A549 (cell line): ENCODE measurements at regions of chr1 and their contacts with region 1.

Region 1: GRCh38 chr1:8878448-8879347 is at the start of gene ENO1:
- DNase-seq: peak; percentile 79 to 97
- ATAC-seq: peak; percentile 67 to 72
- H3K4me3 ChIP-seq: peak within 1 kb of the TSS; percentile 78
- H3K27ac ChIP-seq: peak within 1 kb of the TSS; percentile 99
- H3K4me1 ChIP-seq: peaks cover 47% of the 10 kb centered on the region
- CTCF ChIP-seq: no peak
- EP300 ChIP-seq: no peak
- POLR2A ChIP-seq: peak; percentile 90
- RAD21 ChIP-seq: 0 out of 5 replicates have a peak, but pooled peaks of 1 of the 2 experiments have one; percentile 11
- polyA plus RNA-seq, gene ENO1: 1,899 and 1,948 TPM in 2 replicates

Region 2: GRCh38 chr1:8858888-8859706 is 19.6 kb before region 1 on chr1:
- CTCF ChIA-PET with region 1: interaction called, 23 read pairs
- POLR2A ChIA-PET with region 1: interaction called, 12 read pairs
- DNase-seq: peak in 1 of 2 experiments; percentile 72
- ATAC-seq: peak; percentile 4 to 20; a peak in 5 of 6 replicates
- H3K4me3 ChIP-seq: no peak overlapping the region
- H3K27ac ChIP-seq: peak overlapping the region in 1 of 2 experiments; percentile 56; a peak in 2 of 6 replicates
- H3K4me1 ChIP-seq: peaks cover 40% of the 10 kb centered on the region; the same call in 2 of the 3 replicates
- CTCF ChIP-seq: peak; percentile 52
- EP300 ChIP-seq: no peak
- POLR2A ChIP-seq: no peak
- RAD21 ChIP-seq: peak; percentile 37 to 43; a peak in 4 of 5 replicates

Region 3: GRCh38 chr1:8866792-8867415 is 11.8 kb before region 1 on chr1:
- CTCF ChIA-PET with region 1: interaction called, 23 read pairs
- POLR2A ChIA-PET with region 1: interaction called, 20 read pairs
- DNase-seq: no peak
- ATAC-seq: no peak
- H3K4me3 ChIP-seq: no peak overlapping the region
- H3K27ac ChIP-seq: peak overlapping the region in 1 of 2 experiments; percentile 99; a peak in 3 of 6 replicates
- H3K4me1 ChIP-seq: peaks cover 98% of the 10 kb centered on the region
- CTCF ChIP-seq: no peak
- EP300 ChIP-seq: no peak
- POLR2A ChIP-seq: no peak
- RAD21 ChIP-seq: no peak

Region 4: GRCh38 chr1:8889925-8890785 is 11.5 kb after region 1 on chr1:
- CTCF ChIA-PET with region 1: interaction called, 4 read pairs
- POLR2A ChIA-PET with region 1: interaction called, 39 read pairs
- DNase-seq: peak in 1 of 2 experiments; percentile 78
- ATAC-seq: peak; percentile 91 to 95
- H3K4me3 ChIP-seq: peak overlapping the region; percentile 28; the same call in 2 of the 3 replicates
- H3K27ac ChIP-seq: peak overlapping the region; percentile 95 to 99
- H3K4me1 ChIP-seq: peaks cover 53% of the 10 kb centered on the region
- CTCF ChIP-seq: no peak
- EP300 ChIP-seq: peak in 1 of 2 experiments; percentile 32; a peak in 1 of 5 replicates
- POLR2A ChIP-seq: no peak
- RAD21 ChIP-seq: 0 out of 5 replicates have a peak, but pooled peaks have one; percentile 2 to 19